ENCODE measurements at regions of chr9 and their contacts with region 1.

Region 1: DNA sequence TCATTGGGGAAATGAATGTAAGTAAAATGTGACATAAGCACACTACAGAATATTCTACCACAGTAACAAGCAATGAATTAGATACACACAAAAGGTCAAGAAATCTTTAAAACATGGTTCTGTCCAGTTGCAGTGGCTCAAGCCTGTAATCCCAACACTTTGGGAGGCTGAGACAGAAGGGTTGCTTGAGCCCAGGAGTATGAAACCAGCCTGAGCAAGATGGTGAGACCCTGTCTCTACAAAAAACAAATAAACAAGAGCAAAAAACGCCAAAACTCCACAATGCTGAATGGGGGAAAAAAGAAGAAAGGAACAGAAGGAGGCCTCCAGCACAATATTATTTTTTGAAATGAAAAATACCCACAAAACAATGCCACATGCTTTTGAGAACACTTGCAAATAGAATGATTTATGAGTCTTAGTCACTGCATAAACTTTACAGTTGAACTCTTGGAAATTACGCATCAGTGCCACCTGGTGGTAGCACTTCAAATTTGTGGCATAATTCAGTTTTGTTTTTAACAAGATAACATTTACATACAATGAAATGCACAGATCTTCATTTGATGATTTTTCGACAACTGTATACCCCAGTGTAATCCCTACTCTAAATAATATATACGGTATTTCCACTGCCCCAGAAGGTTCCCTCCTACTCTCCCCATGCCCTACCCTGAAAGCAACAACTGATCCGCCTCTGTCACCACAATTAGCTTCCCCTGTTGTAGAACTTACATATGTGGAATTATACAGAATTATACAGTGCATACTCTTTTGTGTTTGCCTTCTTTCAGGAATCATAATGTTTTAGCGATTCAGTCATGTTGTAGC is 14.4 kb upstream of the SPINK4 start:
- DNase-seq: peak; percentile 43
- ATAC-seq: peak; percentile 32 to 48

Region 2: DNA sequence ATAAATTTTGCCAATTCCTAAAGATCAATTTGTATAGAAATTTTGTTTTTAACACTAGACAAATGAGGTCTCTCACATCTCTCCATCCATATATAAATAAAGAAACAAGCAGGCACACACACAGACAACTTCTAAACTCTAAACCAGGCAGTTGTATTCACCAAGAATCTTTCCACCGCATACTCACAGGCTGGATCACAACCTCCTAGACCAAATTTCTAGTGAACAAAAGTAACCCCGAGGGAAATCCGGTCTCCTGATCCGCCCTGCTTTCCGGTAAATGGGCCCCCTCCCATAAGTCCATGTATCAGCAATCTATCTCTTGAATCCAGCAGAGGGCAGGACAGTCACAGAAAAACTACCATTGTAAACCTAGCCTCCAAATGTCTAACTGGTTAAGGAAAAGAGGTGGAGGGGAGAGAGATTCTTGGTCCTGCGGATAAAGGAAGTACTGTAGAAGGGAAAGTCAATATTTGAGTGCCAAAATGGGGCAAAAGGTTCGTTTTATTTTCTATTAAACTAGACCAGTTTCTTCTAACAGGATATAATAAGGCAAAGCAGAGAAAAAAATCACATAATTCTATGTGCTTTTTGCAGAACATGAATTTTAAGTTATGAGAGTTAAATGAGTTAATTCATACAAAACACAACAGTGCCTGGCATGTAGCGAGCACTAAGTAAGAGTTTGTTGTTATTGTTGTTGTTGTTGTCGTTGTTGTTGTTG is 144.2 kb before region 1 on chr9:
- intact Hi-C with region 1: loop called (anchors 1 to 2 kb)
- DNase-seq: peak; percentile 67
- ATAC-seq: peak; percentile 56 to 67